SK-N-SH (cell line): ENCODE measurements at regions of chr14 and their contacts with region 1.

Region 1: GRCh38 chr14:77028384-77029231 is at the start of gene IRF2BPL:
- DNase-seq: peak; percentile 97
- H3K4me3 ChIP-seq: peak within 1 kb of the TSS; percentile 77 to 84
- H3K27ac ChIP-seq: peak within 1 kb of the TSS; percentile 96 to 99
- H3K4me1 ChIP-seq: peaks cover 36 to 41% of the 10 kb centered on the region in 2 experiments
- H3K27me3 ChIP-seq: no peaks in the 10 kb centered on the region
- CTCF ChIP-seq: no peak
- EP300 ChIP-seq: peak; percentile 79; a peak in 3 of 4 replicates
- RAD21 ChIP-seq: peak; percentile 21
- polyA plus RNA-seq, gene IRF2BPL: 10.9 and 17.1 TPM in 2 replicates

Region 2: DNA sequence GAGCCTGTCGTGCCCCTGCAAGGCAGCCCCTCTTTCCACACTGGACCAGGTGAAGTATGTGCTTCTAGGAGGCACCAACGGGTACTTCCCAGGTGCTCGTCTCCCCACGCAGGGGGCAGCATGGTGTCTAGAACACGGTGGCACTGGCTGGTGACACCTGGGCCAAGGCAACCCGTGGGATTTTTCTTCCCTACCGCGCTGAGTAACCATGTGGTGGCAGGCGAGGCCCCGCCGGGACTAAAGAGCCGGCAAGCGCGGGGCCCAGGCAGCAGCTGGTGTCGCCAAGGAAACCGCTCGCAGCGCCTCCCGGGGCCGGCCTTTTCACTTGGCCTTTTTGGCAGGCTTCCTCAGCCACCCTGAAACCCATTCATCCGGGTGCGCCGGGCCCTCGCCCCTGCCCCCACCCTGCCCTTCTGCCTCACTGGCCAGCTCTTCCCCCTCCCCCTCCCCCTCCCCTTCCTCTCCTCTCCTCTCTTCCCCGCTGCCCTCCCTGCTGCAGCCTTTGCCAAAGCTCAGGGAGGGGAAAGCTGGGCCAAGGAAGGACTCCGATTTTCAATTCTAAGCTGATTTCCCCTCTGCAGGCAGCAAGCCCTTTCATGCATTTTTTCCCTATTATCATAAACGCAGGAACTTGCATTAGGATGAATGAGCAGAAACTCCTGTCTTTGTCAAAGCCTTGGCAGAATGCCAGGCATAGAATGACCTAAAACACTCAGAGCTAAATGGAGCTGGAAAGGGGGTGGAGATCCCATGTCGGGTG is 81.3 kb before region 1 on chr14:
- CTCF ChIA-PET with region 1: interaction called, 30 read pairs
- POLR2A ChIA-PET with region 1: interaction called, 3 read pairs
- DNase-seq: peak; percentile 90
- H3K4me3 ChIP-seq: peak overlapping the region; percentile 18 to 50
- H3K27ac ChIP-seq: peak overlapping the region; percentile 99
- H3K4me1 ChIP-seq: peaks cover 43 to 46% of the 10 kb centered on the region in 2 experiments
- H3K27me3 ChIP-seq: no peaks in the 10 kb centered on the region
- CTCF ChIP-seq: peak; percentile 52
- EP300 ChIP-seq: peak; percentile 47 to 49; a peak in 2 of 4 replicates
- RAD21 ChIP-seq: peak; percentile 73

Region 3: DNA sequence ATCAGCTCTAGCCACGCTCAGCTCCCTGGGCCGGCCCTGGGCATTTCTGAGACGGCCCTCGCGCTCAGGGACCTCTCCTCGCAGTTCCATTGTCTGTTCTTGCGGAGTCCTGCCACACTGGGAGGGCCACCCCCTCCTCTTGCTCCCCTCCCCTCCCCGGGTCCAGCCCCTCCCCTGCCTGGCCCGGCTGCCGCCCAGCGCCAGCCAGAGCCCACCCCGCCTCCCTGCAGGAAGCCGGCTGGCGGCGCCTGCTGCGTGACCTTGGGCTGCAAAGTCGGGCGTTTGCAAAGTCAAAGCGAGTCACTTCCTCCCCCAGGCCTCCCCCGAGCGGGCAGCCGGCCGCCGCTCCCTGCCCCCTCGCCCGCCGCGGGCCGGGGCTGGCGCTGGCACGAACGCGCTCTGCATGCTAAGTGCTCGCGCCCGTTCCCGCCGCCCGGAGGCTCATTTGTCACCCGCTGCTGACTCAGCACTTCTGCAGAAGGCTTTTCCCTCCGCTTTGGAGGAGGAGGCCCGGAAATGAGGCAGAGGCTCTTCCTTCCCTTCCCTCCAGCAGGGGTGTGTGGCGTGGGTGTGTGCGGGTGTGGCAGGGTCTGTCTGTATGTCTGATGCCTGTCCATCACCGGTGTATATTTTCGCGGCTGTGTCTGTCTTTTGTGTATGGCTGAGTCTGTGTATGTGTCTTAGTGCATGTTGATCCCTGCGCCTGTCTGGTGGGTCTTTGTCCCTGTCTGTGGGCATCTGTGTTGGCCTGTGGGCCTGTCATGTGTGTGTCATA is 72.1 kb before region 1 on chr14:
- CTCF ChIA-PET with region 1: interaction called, 7 read pairs
- POLR2A ChIA-PET with region 1: interaction called, 15 read pairs
- DNase-seq: peak; percentile 91
- H3K4me3 ChIP-seq: peak overlapping the region; percentile 25 to 38; a peak in 3 of 4 replicates
- H3K27ac ChIP-seq: peak overlapping the region; percentile 98 to 99
- H3K4me1 ChIP-seq: peaks cover 68 to 71% of the 10 kb centered on the region in 2 experiments
- H3K27me3 ChIP-seq: no peaks in the 10 kb centered on the region
- CTCF ChIP-seq: 0 out of 2 replicates have a peak, but pooled peaks have one; percentile 8
- EP300 ChIP-seq: peak; percentile 82 to 93; a peak in 3 of 4 replicates
- RAD21 ChIP-seq: 0 out of 2 replicates have a peak, but pooled peaks have one; percentile 9

Region 4: GRCh38 chr14:77040059-77040740 is 11.6 kb after region 1 on chr14:
- CTCF ChIA-PET with region 1: interaction called, 31 read pairs
- POLR2A ChIA-PET with region 1: interaction called, 28 read pairs
- DNase-seq: peak; percentile 86
- H3K4me3 ChIP-seq: peak overlapping the region; percentile 34 to 48
- H3K27ac ChIP-seq: peak overlapping the region; percentile 99 to 100
- H3K4me1 ChIP-seq: peaks cover 76 to 84% of the 10 kb centered on the region in 2 experiments
- H3K27me3 ChIP-seq: no peaks in the 10 kb centered on the region
- CTCF ChIP-seq: no peak
- EP300 ChIP-seq: peak; percentile 91
- RAD21 ChIP-seq: peak; percentile 25

Region 5: GRCh38 chr14:77067632-77068514 is 39.3 kb after region 1 on chr14:
- CTCF ChIA-PET with region 1: interaction called, 43 read pairs
- POLR2A ChIA-PET with region 1: no interaction called
- DNase-seq: peak; percentile 84
- H3K4me3 ChIP-seq: no peak overlapping the region; a peak in 1 of 4 replicates
- H3K27ac ChIP-seq: no peak overlapping the region
- H3K4me1 ChIP-seq: peaks cover 0 to 14% of the 10 kb centered on the region in 2 experiments; a peak in 2 of 4 replicates
- H3K27me3 ChIP-seq: no peaks in the 10 kb centered on the region
- CTCF ChIP-seq: peak; percentile 92
- EP300 ChIP-seq: no peak
- RAD21 ChIP-seq: peak; percentile 95